Sciatic nerve (tissue), 2 donors: ENCODE measurements at regions of chr2 and their contacts with region 1.

Region 1: DNA sequence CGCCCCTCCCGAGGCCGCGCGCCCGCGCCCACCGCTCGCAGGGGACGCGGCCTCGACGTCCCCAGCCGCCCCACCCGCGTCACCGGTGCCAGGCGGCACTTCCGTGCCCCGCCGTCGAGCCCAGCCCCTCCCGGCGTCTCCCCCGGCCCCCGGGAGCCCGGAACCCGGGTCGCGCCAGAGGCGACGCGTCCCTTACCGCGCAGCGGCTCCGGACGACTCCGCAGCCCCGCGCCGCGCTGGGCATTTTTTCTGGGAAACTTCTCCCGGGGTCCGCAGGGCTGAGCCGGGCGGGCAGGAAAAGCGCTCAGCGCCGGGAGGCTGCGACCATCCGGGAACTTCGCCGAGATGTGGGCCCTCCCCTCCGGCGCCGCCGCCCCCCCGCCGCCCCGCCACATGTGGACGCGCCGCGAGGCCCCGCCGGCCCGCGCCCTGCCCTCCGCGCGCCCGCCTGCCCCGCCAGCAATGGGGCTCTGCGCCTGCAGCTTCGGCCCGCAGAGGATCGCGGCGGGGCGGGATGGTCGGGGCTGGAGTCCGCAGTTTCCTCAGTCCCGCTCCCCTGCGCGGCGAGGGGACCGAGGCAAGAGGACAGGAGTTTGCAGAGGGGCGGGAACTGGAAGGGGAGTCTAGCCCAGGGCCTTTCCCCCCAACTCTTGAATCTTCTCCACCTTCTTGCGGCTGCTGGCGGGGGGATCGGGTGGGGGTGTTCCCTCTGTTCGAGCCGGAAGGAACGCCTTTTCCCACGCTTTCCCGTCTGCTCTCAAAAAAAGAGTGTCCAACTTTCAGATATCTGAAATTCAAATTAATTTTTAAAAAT is 81.5 kb downstream of the CHRNA1 start:
- DNase-seq: peak; percentile 89
- ATAC-seq: peak; percentile 78

Region 2: GRCh38 chr2:174465327-174465726 is 217.5 kb before region 1 on chr2:
- intact Hi-C with region 1: loop called (anchors 10 kb)
- DNase-seq: no peak
- ATAC-seq: peak; percentile 63

Region 3: DNA sequence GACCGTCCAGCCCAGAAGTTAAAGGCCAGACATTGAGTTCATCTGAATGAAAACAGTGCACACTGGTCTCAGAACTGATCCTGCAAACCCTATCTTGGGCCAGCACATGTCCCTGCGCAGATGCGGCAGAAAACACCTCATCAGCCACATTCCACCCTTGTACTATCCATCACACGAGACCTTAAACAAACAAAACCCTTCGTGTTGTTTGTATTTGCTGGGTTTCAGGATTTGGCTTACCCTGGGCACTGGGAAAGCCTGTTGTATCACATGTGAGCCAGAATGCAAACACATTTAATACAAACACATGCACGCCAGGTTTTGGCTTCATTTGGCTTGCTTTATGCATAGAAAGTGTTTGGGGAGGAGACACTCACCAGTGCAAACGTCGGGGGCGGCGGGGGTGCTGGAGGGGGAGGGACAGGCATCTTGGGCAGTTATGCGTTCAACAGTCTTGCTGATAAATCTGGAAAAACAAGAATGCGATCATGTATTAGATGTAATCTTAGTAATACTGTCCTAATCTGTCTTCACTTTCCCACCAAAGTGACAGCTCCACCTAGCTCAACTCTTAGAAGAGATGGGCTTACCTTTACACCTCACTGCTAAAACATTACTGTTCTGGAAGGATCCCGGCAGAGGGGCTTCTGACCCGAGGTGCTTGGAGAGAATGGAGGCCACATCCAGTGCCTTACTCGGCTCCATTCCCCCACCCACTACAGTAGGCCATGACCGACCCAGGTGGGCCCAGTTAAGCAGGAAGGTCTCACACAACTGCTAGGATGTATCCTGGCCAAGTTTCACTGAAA is 97.4 kb before region 1 on chr2:
- intact Hi-C with region 1: loop called (anchors 10 kb)
- DNase-seq: no peak
- ATAC-seq: peak; percentile 79

Region 4: GRCh38 chr2:174615871-174616436 is 66.8 kb before region 1 on chr2:
- intact Hi-C with region 1: loop called (anchors 10 kb)
- DNase-seq: no peak
- ATAC-seq: peak; percentile 49

Region 5: GRCh38 chr2:174654419-174654941 is 28.3 kb before region 1 on chr2:
- intact Hi-C with region 1: no loop called
- DNase-seq: no peak
- ATAC-seq: no peak